Activated naive CD4-positive, alpha-beta T cell treated with anti-CD3 and anti-CD28 coated beads, Interleukin-2, amount 10 ng/mL, durations not matched to agents 7 days and 5 days (primary cell): ENCODE measurements at regions of chr2 and their contacts with region 1.

Region 1: DNA sequence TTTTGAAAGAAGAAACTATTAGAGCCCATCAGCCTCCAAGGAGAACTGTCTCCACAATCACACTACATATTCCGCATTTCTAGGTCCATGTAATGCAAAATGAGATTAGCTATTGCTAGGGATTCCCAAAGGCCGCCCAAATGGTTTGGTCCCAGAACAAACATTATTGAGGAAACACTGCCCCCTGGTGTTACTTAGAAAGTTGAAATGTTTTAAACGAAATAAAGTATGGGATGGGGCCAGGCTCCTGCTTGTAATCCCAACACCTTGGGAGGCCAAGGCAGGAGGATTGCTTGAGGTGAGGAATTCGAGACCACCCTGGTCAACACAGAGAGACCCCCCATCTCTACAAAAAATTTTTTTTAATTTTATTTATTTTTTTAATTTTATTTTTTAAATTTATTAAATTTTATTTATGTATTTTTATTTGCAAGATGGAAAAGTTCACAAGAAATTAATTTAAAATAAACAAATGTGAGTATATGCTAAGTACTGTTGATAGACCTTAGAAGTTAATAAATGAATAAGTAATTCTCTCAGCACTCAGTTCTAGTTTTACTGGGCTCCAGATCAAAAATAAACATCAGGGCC is 5.5 kb downstream of the NHEJ1 start:
- DNase-seq: peak; percentile 41
- H3K4me3 Mint-ChIP-seq: no peak overlapping the region
- H3K27ac Mint-ChIP-seq: no peak overlapping the region
- H3K4me1 Mint-ChIP-seq: peaks cover 15% of the 10 kb centered on the region
- H3K27me3 Mint-ChIP-seq: no peaks in the 10 kb centered on the region

Region 2: GRCh38 chr2:218924757-218925156 is 230.4 kb before region 1 on chr2:
- CTCF ChIA-PET with region 1: no interaction called
- DNase-seq: no peak
- H3K4me3 Mint-ChIP-seq: no peak overlapping the region
- H3K27ac Mint-ChIP-seq: no peak overlapping the region
- H3K4me1 Mint-ChIP-seq: no peaks in the 10 kb centered on the region
- H3K27me3 Mint-ChIP-seq: peaks cover 31% of the 10 kb centered on the region

Region 3: DNA sequence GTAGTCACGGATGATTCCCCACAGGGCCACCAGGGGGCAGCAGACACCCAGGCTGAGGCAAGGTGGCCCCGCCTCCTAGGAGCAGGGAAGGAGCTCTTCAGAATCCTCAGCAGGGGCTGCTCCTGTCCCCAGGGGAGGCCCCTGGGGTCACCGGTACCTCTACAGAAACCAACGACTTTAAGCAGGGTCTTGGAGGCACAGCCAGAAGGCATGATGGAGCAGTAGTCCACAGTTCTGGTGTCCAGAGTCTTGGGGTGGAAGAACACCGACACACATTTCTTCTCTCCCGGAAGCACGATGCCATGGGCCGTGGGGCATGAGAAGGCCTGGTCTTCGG is 125.4 kb before region 1 on chr2:
- CTCF ChIA-PET with region 1: interaction called, 59 read pairs
- DNase-seq: peak; percentile 83
- H3K4me3 Mint-ChIP-seq: no peak overlapping the region
- H3K27ac Mint-ChIP-seq: no peak overlapping the region
- H3K4me1 Mint-ChIP-seq: no peaks in the 10 kb centered on the region
- H3K27me3 Mint-ChIP-seq: peaks cover 40% of the 10 kb centered on the region

Region 4: DNA sequence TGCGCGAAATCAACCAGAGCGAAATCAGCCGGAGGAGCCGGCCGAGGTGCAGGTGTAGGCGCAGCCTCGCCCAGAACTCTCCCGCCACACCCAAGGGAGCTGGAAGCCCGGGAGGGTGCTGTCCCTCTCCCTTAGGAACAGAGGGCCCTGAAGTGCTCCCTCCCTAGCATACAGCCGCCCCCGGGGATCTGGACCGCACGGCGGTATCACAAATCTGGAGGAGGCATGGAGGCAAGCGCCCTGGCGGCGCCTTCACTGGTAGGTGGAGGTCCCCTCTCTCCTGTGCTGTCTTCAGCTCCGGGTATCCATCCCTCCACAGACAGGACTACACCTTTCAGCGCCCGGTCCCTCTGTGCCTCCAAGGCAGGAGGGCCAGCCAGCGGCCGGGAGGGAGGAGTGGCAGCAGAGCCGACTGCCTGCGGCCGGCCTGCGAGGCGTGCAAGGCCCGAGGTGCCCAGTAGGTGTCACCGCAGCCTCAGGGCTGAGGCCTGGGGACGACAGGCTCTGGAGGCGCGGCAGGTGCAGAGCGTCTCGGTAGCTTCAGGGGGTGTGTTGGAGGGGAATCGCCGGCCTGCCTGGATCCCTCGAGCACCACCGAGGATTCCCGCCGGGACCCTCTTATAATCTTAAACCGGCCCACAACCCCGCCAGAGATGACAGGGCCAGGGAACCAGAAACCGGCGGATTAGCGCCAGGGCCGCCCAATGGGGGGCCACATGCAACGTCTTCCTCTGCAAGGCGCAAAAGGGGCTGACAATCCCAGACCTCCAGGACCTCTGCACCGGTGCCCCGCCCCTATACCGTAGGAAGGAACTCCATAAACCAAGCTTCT is 97.2 kb before region 1 on chr2:
- CTCF ChIA-PET with region 1: interaction called, 47 read pairs
- DNase-seq: peak; percentile 81
- H3K4me3 Mint-ChIP-seq: no peak overlapping the region
- H3K27ac Mint-ChIP-seq: peak overlapping the region; percentile 24
- H3K4me1 Mint-ChIP-seq: peaks cover 22% of the 10 kb centered on the region
- H3K27me3 Mint-ChIP-seq: peaks cover 98% of the 10 kb centered on the region

Region 5: DNA sequence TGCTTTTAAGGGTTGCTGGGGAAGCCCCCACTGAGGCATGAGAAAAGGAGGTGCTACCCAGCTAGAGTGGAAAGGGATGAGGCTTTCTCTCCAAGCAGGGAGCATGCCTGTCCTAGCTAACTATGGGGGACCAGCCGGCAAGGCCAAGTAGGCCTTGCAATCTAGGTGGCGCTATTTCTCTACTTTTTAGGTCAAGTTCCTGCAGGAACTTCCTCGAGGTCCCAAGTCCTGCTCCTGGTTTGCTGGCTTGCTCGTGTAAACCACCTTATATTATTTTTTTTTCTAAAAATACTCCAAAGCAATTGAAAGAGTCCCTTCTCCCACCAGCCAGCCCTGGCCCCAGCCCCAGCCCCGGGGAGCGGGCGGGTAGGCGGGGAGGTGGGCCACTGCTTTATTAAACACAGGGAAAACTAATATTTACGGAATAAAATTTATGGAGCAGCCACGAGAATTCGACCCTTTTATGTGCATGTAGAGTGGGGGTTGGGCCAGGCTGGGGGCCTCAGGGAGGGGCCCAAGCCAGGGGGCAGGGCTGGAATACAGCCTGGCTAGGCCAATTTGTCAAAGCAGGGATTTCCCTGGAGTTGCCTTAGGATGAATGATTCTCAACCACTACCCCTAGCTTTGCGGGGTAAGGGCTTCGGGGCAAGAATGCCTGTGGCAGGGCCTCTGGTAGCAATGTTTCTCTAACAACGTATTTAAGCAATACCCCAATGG is 81.6 kb before region 1 on chr2:
- CTCF ChIA-PET with region 1: interaction called, 25 read pairs
- DNase-seq: no peak
- H3K4me3 Mint-ChIP-seq: no peak overlapping the region
- H3K27ac Mint-ChIP-seq: no peak overlapping the region
- H3K4me1 Mint-ChIP-seq: no peaks in the 10 kb centered on the region
- H3K27me3 Mint-ChIP-seq: no peaks in the 10 kb centered on the region

Region 6: DNA sequence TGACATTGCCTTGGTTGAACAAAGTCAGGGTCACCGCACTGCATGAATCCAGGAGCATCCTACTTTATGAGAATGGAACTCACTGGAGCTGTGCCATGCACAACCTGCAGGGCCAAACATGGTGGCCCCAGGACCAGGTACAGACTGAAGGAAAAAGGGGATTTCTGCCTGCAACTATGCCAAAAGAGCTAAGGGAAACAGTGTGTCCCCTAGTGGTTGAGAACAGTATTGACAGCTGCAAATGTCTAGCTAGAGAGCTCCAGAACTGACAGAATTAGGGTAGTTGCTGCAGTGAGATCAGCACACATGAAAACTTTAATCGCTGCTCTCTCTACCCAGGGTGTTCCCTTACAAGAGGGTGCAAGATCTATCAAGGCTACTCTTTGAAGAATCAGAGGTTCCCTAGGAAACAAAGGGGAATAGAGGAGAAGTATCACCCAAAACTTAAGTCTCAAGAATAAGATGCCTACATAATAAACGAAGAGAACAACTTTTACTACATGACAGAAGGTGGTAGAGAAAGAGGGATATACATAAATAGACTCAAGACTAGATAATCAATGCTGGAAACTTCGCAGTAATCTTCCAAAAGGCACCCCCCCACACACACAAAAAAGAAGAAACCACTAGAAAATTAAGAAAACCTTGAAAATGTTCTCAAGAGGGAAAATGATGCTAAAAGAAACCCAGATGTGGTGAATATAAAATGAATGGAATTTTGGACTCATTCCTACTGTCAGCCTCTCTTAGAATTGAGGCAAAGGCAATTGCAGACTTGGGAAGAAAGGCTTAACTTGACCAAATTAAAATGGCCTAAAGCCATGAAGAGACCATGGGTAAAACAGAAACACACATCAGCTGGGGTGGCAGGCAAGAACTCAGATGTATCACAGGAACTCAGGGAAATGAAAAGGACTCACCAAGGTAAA is 50.8 kb before region 1 on chr2:
- CTCF ChIA-PET with region 1: interaction called, 11 read pairs
- DNase-seq: no peak
- H3K4me3 Mint-ChIP-seq: no peak overlapping the region
- H3K27ac Mint-ChIP-seq: no peak overlapping the region
- H3K4me1 Mint-ChIP-seq: peaks cover 3% of the 10 kb centered on the region
- H3K27me3 Mint-ChIP-seq: no peaks in the 10 kb centered on the region

Region 7: GRCh38 chr2:219142329-219142728 is 12.8 kb before region 1 on chr2:
- CTCF ChIA-PET with region 1: interaction called, 10 read pairs
- DNase-seq: no peak
- H3K4me3 Mint-ChIP-seq: no peak overlapping the region
- H3K27ac Mint-ChIP-seq: no peak overlapping the region
- H3K4me1 Mint-ChIP-seq: no peaks in the 10 kb centered on the region
- H3K27me3 Mint-ChIP-seq: no peaks in the 10 kb centered on the region

Region 8: GRCh38 chr2:219327719-219328118 is 172.6 kb after region 1 on chr2:
- CTCF ChIA-PET with region 1: no interaction called
- DNase-seq: no peak
- H3K4me3 Mint-ChIP-seq: no peak overlapping the region
- H3K27ac Mint-ChIP-seq: no peak overlapping the region
- H3K4me1 Mint-ChIP-seq: no peaks in the 10 kb centered on the region
- H3K27me3 Mint-ChIP-seq: peaks cover 76% of the 10 kb centered on the region